ENCODE measurements at regions of chr4 and their contacts with region 1.

Region 1: GRCh38 chr4:185597532-185598188 is 62.4 kb upstream of the PDLIM3 start:
- DNase-seq: peak; percentile 79
- ATAC-seq: peak; percentile 76

Region 2: DNA sequence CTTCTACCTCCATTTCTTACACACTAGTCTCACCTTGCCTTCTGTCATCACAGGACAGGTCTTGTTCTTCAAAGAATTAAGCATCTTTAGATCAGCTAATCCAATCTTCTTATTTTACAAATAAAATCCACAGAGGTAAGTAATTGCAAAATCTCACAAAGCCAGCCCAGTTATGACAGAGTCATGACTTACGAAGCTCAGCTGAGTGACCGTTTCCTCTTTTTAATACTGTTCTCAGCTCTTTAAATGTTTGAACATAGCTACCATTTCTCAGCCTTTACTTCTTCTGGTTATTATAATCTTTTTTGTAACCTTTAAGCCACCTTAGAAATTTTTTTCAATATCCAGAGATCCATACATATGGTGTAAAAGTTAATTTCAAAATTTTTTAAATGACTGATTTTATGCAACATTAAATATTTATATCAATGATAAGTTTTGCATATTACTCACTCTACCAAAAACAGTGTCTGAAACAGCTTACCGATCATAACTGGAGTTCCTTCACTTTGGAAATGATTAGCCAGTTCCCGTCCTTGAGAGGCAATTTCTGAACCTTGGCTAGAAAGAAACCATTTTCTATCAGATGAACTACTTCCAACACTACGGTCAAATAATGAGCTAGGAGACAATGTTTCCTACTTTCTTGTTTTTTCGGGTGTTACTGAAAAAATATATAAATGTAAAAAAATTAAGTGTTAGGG is 192.2 kb before region 1 on chr4:
- intact Hi-C with region 1: loop called (anchors 10 kb)
- DNase-seq: no peak
- ATAC-seq: no peak

Region 3: GRCh38 chr4:185534866-185535611 is 62.6 kb before region 1 on chr4 and contains the start of gene PDLIM3:
- intact Hi-C with region 1: loop called (anchors 10 kb)
- DNase-seq: peak; percentile 82
- ATAC-seq: peak; percentile 91
- total RNA-seq, gene PDLIM3: 208 TPM

Measured in Right ventricle myocardium superior (tissue), 1 donor.